ENCODE measurements at regions of chr18 and their contacts with region 1.

Region 1: GRCh38 chr18:49858309-49859020 is 45.1 kb upstream of the ACAA2 start:
- DNase-seq: peak; percentile 75
- H3K4me3 ChIP-seq: no peak overlapping the region
- H3K27ac ChIP-seq: peak overlapping the region; percentile 84 to 92 (median 86)
- H3K4me1 ChIP-seq: peaks cover 3 to 32% (median 17%) of the 10 kb centered on the region in 4 donors
- H3K27me3 ChIP-seq: no peaks in the 10 kb centered on the region
- CTCF ChIP-seq: peak; percentile 90 to 99 (median 94)
- EP300 ChIP-seq: no peak
- POLR2A ChIP-seq: peak; percentile 39

Region 2: GRCh38 chr18:49321800-49322461 is 536.5 kb before region 1 on chr18:
- in situ Hi-C with region 1: no loop called
- intact Hi-C with region 1: no loop called
- DNase-seq: no peak
- H3K4me3 ChIP-seq: no peak overlapping the region
- H3K27ac ChIP-seq: no peak overlapping the region
- H3K4me1 ChIP-seq: no peaks in the 10 kb centered on the region
- H3K27me3 ChIP-seq: no peaks in the 10 kb centered on the region
- CTCF ChIP-seq: no peak
- EP300 ChIP-seq: no peak
- POLR2A ChIP-seq: no peak

Region 3: DNA sequence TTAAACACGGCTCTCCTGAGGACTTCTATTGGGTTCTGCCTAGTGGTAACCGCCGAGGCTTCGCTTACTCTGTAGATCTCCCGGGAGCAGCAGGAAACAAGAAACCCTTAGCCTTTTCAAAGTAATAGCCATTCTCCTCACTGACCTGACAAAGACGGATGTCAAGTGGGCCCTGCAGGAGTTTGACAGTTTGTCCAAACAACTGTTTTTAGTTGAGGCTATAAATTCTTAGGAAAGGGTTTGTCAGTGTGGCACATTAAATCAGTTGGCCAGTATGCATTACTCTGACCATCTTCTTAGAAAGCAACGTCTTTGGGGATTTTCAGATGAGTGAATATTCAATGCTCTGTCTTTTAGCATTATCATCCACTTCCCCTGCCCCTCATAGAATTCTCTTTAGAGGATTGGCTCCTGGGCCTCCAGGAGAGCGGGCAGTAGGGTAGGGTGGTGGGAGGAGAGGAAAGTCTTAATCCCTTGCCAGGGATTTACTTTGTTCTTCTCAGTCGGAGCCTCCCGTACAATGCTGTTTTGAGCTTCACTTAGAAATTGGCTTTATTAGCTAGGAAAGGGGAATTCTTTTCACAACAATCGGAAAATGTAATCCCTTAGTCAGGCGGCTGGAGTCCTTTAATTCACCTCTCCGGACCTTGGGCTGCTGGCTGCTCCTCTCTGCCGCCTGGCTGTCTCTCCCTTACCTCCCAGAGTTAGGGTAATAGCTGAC is 358.1 kb before region 1 on chr18:
- in situ Hi-C with region 1: loop called in 2 of 4 experiments (anchors 10 to 25 kb)
- intact Hi-C with region 1: no loop called
- DNase-seq: no peak
- H3K4me3 ChIP-seq: no peak overlapping the region
- H3K27ac ChIP-seq: no peak overlapping the region
- H3K4me1 ChIP-seq: no peaks in the 10 kb centered on the region
- H3K27me3 ChIP-seq: peaks cover 13% of the 10 kb centered on the region
- CTCF ChIP-seq: no peak
- EP300 ChIP-seq: no peak
- POLR2A ChIP-seq: no peak

Region 4: DNA sequence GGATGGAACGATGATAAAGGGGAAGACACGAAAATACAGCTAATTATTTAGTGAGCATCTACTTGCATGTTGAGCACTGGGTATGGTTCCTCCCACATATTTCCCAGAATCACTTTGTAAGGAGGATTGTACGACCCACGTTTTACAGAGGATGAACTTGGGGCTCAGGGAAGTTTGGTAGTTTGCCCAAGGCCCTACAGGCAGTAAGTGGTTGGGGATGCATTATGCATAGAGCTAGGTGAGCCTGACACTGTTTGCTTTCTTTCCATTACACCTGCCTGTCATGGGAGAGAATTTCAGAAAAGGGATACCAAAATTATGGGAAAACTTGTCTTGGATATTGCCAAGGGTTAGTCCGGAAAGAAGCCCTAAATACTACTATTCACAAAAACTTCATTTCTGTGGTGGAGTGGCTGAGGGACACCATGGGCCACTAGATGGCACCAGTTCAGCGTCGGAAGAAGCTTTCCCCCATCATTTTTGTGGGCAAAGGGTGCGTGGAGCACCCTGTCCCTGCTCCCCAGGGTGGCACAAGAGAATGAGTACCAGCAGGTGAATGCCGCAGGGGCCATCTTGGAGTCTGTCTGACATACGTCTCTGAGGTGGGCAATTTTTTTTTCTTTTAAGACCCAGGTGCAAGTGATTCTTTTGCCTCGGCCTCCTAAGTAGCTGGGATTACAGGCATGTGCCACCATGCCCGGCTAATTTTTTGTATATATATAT is 347.9 kb before region 1 on chr18:
- in situ Hi-C with region 1: loop called (anchors 5 to 25 kb)
- intact Hi-C with region 1: loop called (anchors 5 kb)
- DNase-seq: peak; percentile 45
- H3K4me3 ChIP-seq: no peak overlapping the region
- H3K27ac ChIP-seq: no peak overlapping the region
- H3K4me1 ChIP-seq: peaks cover 0 to 6% (median 3%) of the 10 kb centered on the region in 4 donors
- H3K27me3 ChIP-seq: no peaks in the 10 kb centered on the region
- CTCF ChIP-seq: peak; percentile 64 to 79 (median 77)
- EP300 ChIP-seq: no peak
- POLR2A ChIP-seq: no peak

Region 5: DNA sequence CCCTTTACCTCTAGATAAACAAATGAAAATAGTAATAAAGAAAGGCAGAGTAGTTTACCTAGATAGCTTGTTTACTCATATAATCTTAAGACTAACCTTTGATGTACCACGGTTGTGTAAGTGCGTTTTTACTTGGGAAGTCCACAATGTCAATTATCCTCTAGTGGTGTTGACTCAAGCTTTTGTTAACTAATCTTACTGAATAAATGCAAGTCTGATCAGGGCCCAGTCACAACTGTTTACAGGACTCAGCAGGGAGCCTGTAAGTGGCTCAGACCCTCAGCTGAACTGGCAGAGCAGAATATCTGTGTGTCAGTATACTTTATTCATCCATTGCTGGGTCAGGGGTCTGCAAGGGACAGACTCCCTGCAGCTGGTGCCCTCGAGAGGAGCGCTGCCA is 53.0 kb after region 1 on chr18:
- in situ Hi-C with region 1: no loop called
- intact Hi-C with region 1: no loop called
- DNase-seq: no peak
- H3K4me3 ChIP-seq: no peak overlapping the region
- H3K27ac ChIP-seq: no peak overlapping the region
- H3K4me1 ChIP-seq: no peaks in the 10 kb centered on the region
- H3K27me3 ChIP-seq: no peaks in the 10 kb centered on the region
- CTCF ChIP-seq: no peak
- EP300 ChIP-seq: no peak
- POLR2A ChIP-seq: no peak